ENCODE measurements at regions of chr2 and their contacts with region 1.

Region 1: GRCh38 chr2:162007447-162008040 is 66.5 kb downstream of the DPP4 start:
- DNase-seq: no peak
- H3K4me3 ChIP-seq: no peak overlapping the region
- H3K27ac ChIP-seq: no peak overlapping the region
- H3K4me1 ChIP-seq: no peaks in the 10 kb centered on the region
- H3K27me3 ChIP-seq: no peaks in the 10 kb centered on the region
- CTCF ChIP-seq: peak; percentile 82
- EP300 ChIP-seq: no peak
- RAD21 ChIP-seq: peak; percentile 47

Region 2: GRCh38 chr2:161995553-161996016 is 12.0 kb before region 1 on chr2:
- CTCF ChIA-PET with region 1: interaction called, 10 read pairs
- POLR2A ChIA-PET with region 1: no interaction called
- DNase-seq: no peak
- H3K4me3 ChIP-seq: no peak overlapping the region
- H3K27ac ChIP-seq: no peak overlapping the region
- H3K4me1 ChIP-seq: no peaks in the 10 kb centered on the region; a peak in 1 of 4 replicates
- H3K27me3 ChIP-seq: no peaks in the 10 kb centered on the region
- CTCF ChIP-seq: no peak
- EP300 ChIP-seq: no peak
- RAD21 ChIP-seq: no peak

Measured in SK-N-SH (cell line).